ENCODE measurements at regions of chr20 and their contacts with region 1.

Region 1: DNA sequence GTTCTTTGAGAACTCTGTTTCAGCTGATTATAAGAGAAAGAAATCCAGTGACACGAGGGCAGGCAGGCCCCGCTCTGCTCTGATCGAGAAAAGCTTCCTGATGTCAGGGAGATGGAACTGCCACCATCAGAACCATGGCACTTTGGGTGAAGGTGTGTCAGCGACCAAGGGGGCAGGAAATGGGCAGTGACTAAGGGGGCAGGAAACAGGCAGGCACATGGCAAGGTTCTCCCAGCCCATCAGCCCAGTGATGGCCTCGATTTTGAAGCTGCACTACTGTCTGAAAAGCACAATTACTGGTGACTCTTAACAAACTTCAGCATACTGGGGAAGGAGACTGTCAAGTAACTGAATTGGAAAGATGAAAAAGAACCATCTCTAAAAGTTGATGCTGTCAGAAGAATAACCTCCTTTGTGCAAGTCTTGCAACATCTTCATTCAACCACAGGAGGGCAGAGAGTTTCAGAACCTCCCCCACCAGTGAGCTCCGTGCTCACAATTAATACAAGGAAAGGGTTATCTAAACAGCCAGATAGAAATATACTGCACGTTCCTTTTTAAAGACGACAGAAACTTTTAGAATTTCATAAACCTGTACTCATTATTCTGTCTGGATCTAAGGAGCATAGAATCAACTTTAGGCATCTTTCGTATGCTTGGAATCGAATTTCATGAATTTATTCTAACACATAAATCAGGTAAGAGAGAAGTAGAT is 39.1 kb downstream of the TMX4 start:
- DNase-seq: peak; percentile 6
- H3K4me3 Mint-ChIP-seq: no peak overlapping the region
- H3K27ac Mint-ChIP-seq: no peak overlapping the region
- H3K4me1 Mint-ChIP-seq: peaks cover 11% of the 10 kb centered on the region
- H3K27me3 Mint-ChIP-seq: no peaks in the 10 kb centered on the region

Region 2: DNA sequence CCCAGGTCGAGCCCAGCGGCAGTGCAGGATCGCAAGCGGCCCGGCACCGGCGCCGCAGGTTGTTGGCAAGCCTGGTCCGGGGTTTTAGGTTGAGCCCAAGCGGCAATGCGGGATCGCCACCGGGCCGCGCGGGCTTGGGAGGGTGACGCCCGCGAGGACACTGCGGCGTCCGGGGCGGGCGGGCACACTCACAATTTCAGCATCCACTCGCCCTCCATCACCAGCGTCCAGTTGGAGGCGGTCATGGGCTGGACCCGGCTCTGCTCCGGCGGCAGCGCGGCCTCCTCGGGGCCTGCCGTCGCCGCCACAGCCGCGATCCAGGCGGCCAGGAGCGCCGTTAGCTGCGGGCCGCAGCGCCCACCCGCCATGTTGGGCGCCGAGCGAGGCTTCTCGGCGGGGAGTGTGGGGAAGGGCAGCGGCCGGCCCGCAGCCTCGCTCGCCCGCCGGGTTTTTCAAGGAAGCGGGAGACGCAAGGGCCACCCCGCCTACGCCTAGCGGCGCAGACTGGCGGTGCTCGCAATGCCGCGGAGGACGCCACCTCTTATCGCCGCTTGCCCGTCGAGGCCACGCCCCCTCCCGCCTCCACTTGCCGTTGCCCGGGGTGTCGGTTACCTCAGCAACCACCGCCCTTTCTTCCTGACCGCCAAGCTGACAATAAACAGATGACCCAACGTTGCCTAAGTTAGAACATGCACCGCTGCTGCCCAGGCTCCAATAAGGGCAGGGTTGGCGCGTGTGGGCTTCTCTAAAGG is 38.9 kb after region 1 on chr20 and contains the start of gene TMX4:
- CTCF ChIA-PET with region 1: no interaction called
- intact Hi-C with region 1: loop called (anchors 5 kb)
- DNase-seq: peak; percentile 92
- H3K4me3 Mint-ChIP-seq: no peak within 1 kb of the TSS
- H3K27ac Mint-ChIP-seq: peak within 1 kb of the TSS; percentile 61
- H3K4me1 Mint-ChIP-seq: peaks cover 17% of the 10 kb centered on the region
- H3K27me3 Mint-ChIP-seq: no peaks in the 10 kb centered on the region
- total RNA-seq, gene TMX4: 28.3 to 29.9 TPM

Measured in activated naive CD4-positive, alpha-beta T cell treated with anti-CD3 and anti-CD28 coated beads for 36 hours (primary cell).